Activated naive CD4-positive, alpha-beta T cell treated with anti-CD3 and anti-CD28 coated beads, Interleukin-2, amount 10 ng/mL, durations not matched to agents 7 days and 5 days (primary cell): ENCODE measurements at regions of chr6 and their contacts with region 1.

Region 1: GRCh38 chr6:99330159-99330558 is 19.3 kb downstream of the FAXC start:
- DNase-seq: peak; percentile 72
- H3K4me3 Mint-ChIP-seq: no peak overlapping the region
- H3K27ac Mint-ChIP-seq: no peak overlapping the region
- H3K4me1 Mint-ChIP-seq: peaks cover 2% of the 10 kb centered on the region
- H3K27me3 Mint-ChIP-seq: no peaks in the 10 kb centered on the region

Region 2: DNA sequence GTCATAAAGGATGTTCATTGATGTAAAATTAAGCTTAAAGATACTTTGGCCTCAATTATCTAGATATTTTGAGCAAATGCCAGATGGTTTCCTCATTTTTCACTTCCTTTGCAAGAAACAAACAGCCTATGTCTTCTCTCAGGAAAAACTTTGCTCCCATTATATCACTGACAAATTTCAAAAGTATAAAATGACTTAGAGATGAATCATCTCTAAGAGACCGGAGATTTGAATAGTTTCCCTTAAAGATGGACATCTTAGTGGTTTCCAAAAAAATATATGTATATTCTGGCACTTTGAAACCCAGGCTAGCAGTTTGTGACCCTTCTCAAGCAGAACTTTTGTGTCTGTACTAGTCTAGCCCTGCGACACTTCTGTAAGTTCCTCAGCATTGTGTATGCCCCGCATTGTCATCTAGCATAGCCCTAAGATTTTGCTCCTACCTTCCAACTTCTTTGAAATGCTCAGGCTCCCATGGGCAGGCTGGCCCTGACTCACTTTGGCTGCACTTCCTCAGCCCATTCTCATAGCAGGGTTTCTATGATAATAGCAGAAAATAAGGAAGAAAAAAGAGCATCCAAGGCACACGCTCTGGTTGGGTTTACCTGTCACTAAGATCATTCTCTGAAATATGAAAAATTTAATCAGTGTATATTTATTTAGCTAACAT is 521.5 kb before region 1 on chr6:
- CTCF ChIA-PET with region 1: no interaction called
- DNase-seq: no peak
- H3K4me3 Mint-ChIP-seq: no peak overlapping the region
- H3K27ac Mint-ChIP-seq: no peak overlapping the region
- H3K4me1 Mint-ChIP-seq: no peaks in the 10 kb centered on the region
- H3K27me3 Mint-ChIP-seq: peaks cover 6% of the 10 kb centered on the region

Region 3: GRCh38 chr6:99344289-99344688 is 14.1 kb after region 1 on chr6:
- CTCF ChIA-PET with region 1: interaction called, 11 read pairs
- DNase-seq: no peak
- H3K4me3 Mint-ChIP-seq: no peak overlapping the region
- H3K27ac Mint-ChIP-seq: no peak overlapping the region
- H3K4me1 Mint-ChIP-seq: no peaks in the 10 kb centered on the region
- H3K27me3 Mint-ChIP-seq: peaks cover 48% of the 10 kb centered on the region